PC-3 (cell line): ENCODE measurements at regions of chr4 and their contacts with region 1.

Region 1: DNA sequence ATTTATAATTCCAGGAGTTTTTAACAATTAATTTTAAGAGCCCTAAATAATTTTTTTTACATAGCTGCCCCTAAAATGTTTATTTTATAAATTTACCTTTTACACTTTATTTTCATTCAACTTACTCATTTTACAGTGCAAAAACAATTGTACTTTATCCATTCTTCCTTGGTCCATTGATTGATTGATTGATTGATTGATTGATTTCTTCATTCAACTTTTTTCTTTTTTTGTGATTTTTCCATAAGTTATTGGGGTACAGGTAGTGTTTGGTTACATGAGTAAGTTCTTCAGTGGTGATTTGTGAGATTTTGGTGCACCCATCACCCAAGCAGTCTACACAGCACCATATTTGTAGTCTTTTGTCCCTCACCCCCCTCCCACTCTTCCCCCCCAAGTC is 81.5 kb downstream of the ARL9 start:
- DNase-seq: no peak
- ATAC-seq: no peak
- H3K4me3 ChIP-seq: no peak overlapping the region
- H3K27ac ChIP-seq: no peak overlapping the region
- H3K4me1 ChIP-seq: no peaks in the 10 kb centered on the region
- H3K27me3 ChIP-seq: no peaks in the 10 kb centered on the region
- CTCF ChIP-seq: no peak

Region 2: DNA sequence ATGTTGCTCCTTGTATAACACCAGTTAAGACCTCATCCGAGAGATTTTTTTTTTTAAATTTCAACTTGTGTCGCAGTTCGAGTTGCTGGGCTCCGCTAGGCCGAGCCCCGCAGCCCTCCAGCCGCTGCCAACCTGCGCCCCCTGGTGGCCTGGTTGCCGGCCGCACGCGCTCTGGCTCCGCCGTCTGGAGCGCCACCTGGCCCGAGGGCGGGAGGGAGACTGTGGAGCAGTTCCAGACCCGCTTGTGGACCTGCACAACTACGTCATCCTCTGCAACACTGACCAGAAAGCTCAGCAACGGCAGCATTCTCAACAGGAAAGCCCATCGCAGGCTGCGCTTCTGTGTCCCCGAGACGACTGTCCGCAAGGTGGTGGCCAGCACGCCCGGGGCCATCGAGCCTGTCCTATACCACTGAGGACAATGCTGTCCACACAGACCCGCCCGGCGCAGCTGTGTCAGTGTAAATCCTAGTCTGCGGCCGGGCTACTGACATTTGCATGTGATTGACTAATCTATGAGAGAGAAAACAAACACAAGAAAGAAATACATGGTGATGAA is 42.4 kb before region 1 on chr4:
- CTCF ChIA-PET with region 1: no interaction called
- POLR2A ChIA-PET with region 1: no interaction called
- intact Hi-C with region 1: no loop called
- DNase-seq: peak; percentile 95
- ATAC-seq: peak; percentile 97
- H3K4me3 ChIP-seq: peak overlapping the region; percentile 69
- H3K27ac ChIP-seq: no peak overlapping the region
- H3K4me1 ChIP-seq: peaks cover 5% of the 10 kb centered on the region; the same call in 1 of the 2 replicates
- H3K27me3 ChIP-seq: no peaks in the 10 kb centered on the region
- CTCF ChIP-seq: peak; percentile 99

Region 3: DNA sequence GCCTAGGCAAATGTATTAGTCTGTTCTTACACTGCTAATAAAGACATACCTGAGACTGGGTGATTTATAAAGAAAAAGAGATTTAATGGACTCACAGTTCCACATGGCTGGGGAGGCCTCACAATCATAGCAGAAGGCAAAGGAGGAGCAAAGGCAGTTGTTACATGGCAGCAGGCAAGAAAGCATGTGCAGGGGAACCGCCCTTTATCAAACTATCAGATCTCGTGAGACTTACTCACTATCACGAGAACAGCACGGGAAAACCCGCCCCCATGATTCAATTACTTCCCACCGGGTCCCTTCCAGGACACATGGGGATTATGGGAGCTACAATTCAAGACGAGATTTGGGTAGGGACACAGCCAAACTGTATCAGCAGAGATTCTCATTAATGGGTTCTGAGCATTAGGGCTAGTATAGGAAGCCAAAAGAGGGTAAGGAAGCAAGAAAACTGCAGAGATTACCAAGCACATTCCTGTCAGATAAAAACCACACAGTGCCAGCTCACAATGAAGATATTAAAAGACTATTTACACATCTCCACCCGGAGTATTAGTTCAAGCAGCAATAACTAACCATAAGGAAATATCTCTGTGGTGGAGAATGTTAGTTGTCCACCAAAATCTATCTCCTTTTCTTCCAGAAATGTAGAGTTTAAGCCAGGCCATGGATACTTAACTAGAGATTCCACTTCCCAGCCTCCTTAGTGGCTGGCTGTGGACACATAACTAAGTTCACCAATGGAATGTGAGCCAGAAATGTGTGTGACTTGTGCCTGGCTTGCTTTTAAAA is 155.2 kb after region 1 on chr4:
- CTCF ChIA-PET with region 1: no interaction called
- POLR2A ChIA-PET with region 1: no interaction called
- intact Hi-C with region 1: no loop called
- DNase-seq: peak; percentile 66
- ATAC-seq: peak; percentile 65
- H3K4me3 ChIP-seq: no peak overlapping the region
- H3K27ac ChIP-seq: peak overlapping the region; percentile 5; the same call in 1 of the 2 replicates
- H3K4me1 ChIP-seq: peaks cover 21% of the 10 kb centered on the region
- H3K27me3 ChIP-seq: no peaks in the 10 kb centered on the region
- CTCF ChIP-seq: no peak

Region 4: DNA sequence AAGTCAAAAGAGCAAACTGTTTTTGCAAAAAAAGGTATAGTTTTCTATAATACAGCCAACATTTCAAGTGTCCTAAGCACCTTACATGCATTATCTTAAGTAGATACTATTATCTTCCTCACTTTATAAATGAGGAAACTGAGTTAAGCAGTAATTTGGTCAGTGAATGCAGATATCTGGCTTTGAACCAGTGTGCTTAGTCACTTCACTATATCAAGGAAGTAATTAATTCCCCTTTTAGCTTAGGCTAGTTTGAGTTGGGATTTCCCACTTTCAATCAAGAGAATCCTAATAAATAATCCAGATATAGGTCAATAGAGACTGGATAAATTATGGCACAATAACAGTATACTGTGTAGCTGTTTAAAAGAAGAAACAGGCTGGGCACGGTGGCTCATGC is 219.6 kb after region 1 on chr4:
- CTCF ChIA-PET with region 1: no interaction called
- POLR2A ChIA-PET with region 1: interaction called, 10 read pairs
- intact Hi-C with region 1: no loop called
- DNase-seq: no peak
- ATAC-seq: no peak
- H3K4me3 ChIP-seq: no peak overlapping the region
- H3K27ac ChIP-seq: no peak overlapping the region
- H3K4me1 ChIP-seq: no peaks in the 10 kb centered on the region
- H3K27me3 ChIP-seq: no peaks in the 10 kb centered on the region
- CTCF ChIP-seq: no peak

Region 5: GRCh38 chr4:56817840-56818491 is 230.9 kb after region 1 on chr4:
- CTCF ChIA-PET with region 1: no interaction called
- POLR2A ChIA-PET with region 1: no interaction called
- intact Hi-C with region 1: no loop called
- DNase-seq: peak; percentile 71
- ATAC-seq: peak; percentile 43; the same call in 1 of the 2 replicates
- H3K4me3 ChIP-seq: no peak overlapping the region
- H3K27ac ChIP-seq: no peak overlapping the region
- H3K4me1 ChIP-seq: 0 out of 2 replicates have a peak, but pooled peaks cover 3% of the 10 kb centered on the region
- H3K27me3 ChIP-seq: no peaks in the 10 kb centered on the region
- CTCF ChIP-seq: no peak